CD4-positive, alpha-beta T cell (primary cell): ENCODE measurements at regions of chr3 and their contacts with region 1.

Region 1: DNA sequence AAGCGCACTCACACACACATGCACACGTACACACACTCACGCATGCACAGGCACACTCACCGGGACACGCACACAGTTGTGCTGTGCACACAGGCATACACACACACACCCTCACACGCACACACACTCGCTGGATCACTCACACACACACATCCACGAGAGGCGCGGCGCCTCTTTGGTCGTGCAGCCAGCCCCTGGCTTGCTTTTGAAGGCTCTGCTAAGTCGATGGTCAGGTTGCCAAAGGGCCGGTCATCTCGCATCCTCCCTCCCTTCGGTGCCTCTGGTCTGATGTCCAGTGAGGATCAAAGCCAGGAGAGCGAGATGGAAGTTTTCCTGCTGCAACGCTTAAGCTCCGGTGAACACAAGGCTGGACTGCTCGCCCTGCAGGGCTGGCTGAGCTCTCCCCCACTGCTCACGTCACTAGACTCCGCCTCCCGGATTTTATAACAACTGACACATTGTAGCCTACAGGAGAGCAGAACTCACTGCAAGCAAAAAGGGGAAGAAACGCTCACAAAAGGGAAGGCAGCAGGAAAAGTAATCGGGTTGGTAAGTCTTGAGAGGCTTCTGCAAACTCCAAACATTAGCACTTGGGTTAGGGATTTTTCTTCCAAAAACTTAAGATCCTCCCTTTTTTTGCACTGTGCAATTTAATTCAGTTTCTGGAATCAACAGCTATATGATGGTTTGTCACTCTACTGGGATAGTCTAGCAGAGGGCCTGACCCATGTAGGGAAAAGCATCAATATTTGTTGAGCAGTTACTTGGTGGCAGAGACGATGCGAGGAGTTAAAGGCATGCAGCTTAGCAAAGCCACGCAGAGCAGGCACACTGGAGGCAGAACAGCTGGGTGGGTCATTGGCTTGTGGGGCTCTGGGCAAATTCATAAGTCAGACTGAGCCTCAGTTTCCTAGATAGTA is at the start of gene SRGAP3:
- DNase-seq: peak; percentile 48 to 90 (median 73)
- ATAC-seq: peak; percentile 98
- H3K4me3 ChIP-seq: peak within 1 kb of the TSS; percentile 62
- H3K4me3 Mint-ChIP-seq: peak within 1 kb of the TSS; percentile 87
- H3K27ac ChIP-seq: no peak within 1 kb of the TSS
- H3K27ac Mint-ChIP-seq: peak within 1 kb of the TSS; percentile 52
- H3K4me1 ChIP-seq: peaks cover 29% of the 10 kb centered on the region
- H3K4me1 Mint-ChIP-seq: peaks cover 26% of the 10 kb centered on the region
- H3K27me3 ChIP-seq: no peaks in the 10 kb centered on the region
- H3K27me3 Mint-ChIP-seq: peaks cover 12% of the 10 kb centered on the region
- CTCF ChIP-seq: peak; percentile 36
- total RNA-seq, gene SRGAP3: 2.8 to 3.2 TPM

Region 2: GRCh38 chr3:8963137-8963869 is 286.2 kb before region 1 on chr3 and contains the start of gene RAD18:
- CTCF ChIA-PET with region 1: no interaction called
- POLR2A ChIA-PET with region 1: no interaction called
- intact Hi-C with region 1: loop called in 1 of 2 experiments (anchors 2 kb)
- DNase-seq: peak; percentile 87 to 96 (median 90)
- ATAC-seq: peak; percentile 93
- H3K4me3 ChIP-seq: peak within 1 kb of the TSS; percentile 88
- H3K4me3 Mint-ChIP-seq: peak within 1 kb of the TSS; percentile 97
- H3K27ac ChIP-seq: peak within 1 kb of the TSS; percentile 80 to 92
- H3K27ac Mint-ChIP-seq: peak within 1 kb of the TSS; percentile 95
- H3K4me1 ChIP-seq: peaks cover 15% of the 10 kb centered on the region
- H3K4me1 Mint-ChIP-seq: peaks cover 43% of the 10 kb centered on the region
- H3K27me3 ChIP-seq: no peaks in the 10 kb centered on the region
- H3K27me3 Mint-ChIP-seq: peaks cover 1% of the 10 kb centered on the region
- CTCF ChIP-seq: no peak
- total RNA-seq, gene RAD18: 9.6 to 10.0 TPM